GM12878 (cell line): ENCODE measurements at regions of chr15 and their contacts with region 1.

Region 1: GRCh38 chr15:54082836-54083492 is 104.7 kb downstream of the UNC13C start:
- DNase-seq: no peak
- ATAC-seq: peak; percentile 68
- H3K4me3 ChIP-seq: no peak overlapping the region
- H3K27ac ChIP-seq: no peak overlapping the region
- H3K4me1 ChIP-seq: no peaks in the 10 kb centered on the region
- H3K27me3 ChIP-seq: no peaks in the 10 kb centered on the region
- CTCF ChIP-seq: peak; percentile 56 to 80 (median 61)
- EP300 ChIP-seq: no peak
- POLR2A ChIP-seq: no peak
- RAD21 ChIP-seq: peak; percentile 72

Region 2: DNA sequence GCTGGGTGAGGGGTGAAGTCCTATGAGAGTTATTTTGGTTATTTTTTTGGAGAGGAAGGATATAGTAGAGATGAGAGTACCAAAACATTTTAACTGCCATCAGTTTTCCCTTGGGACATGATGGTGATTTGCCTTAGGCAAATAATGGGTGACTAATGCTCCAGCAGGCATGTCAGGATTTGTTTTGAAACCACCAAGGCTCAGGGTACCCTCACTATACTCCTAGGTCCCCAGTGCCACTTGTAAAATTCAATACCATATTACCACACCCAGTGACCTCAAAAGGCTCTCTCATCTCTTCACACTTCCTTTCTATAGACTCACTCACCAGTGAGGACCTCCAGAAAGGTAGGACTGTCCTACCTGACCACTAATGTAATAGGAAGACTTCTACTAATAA is 407.1 kb before region 1 on chr15:
- CTCF ChIA-PET with region 1: no interaction called
- POLR2A ChIA-PET with region 1: no interaction called
- RAD21 ChIA-PET with region 1: no interaction called
- SMC1A ChIA-PET with region 1: no interaction called
- in situ Hi-C with region 1: no loop called
- intact Hi-C with region 1: no loop called
- DNase-seq: no peak
- ATAC-seq: no peak
- H3K4me3 ChIP-seq: no peak overlapping the region
- H3K27ac ChIP-seq: no peak overlapping the region
- H3K4me1 ChIP-seq: no peaks in the 10 kb centered on the region
- H3K27me3 ChIP-seq: no peaks in the 10 kb centered on the region
- CTCF ChIP-seq: no peak
- EP300 ChIP-seq: no peak
- POLR2A ChIP-seq: no peak
- RAD21 ChIP-seq: no peak

Region 3: GRCh38 chr15:53962332-53963241 is 120.4 kb before region 1 on chr15:
- CTCF ChIA-PET with region 1: interaction called, 4 read pairs
- POLR2A ChIA-PET with region 1: no interaction called
- RAD21 ChIA-PET with region 1: interaction called, 7 read pairs
- SMC1A ChIA-PET with region 1: interaction called, 10 read pairs
- in situ Hi-C with region 1: no loop called
- intact Hi-C with region 1: no loop called
- DNase-seq: no peak
- ATAC-seq: peak; percentile 94
- H3K4me3 ChIP-seq: no peak overlapping the region
- H3K27ac ChIP-seq: no peak overlapping the region
- H3K4me1 ChIP-seq: no peaks in the 10 kb centered on the region
- H3K27me3 ChIP-seq: no peaks in the 10 kb centered on the region
- CTCF ChIP-seq: peak; percentile 42 to 70 (median 61)
- EP300 ChIP-seq: no peak
- POLR2A ChIP-seq: no peak
- RAD21 ChIP-seq: peak; percentile 68

Region 4: DNA sequence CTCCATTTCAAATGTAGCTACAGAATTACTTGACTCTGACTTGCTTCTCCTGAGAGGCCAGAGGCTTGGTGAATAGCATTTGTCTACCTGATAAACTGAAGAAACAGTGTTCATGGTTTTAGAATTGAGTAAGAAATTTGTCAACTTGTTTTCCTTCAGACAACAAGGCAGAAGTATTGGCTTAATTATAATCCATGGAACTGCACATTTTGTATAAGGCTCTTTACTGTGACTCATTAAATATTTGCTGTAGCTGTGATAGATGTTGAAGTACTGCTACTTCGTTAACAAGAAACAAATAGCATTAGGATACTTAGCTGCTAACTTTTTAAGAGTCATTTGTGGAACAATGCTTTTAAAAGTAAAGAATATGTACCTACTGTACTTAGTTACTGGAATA is 100.1 kb before region 1 on chr15:
- CTCF ChIA-PET with region 1: interaction called, 16 read pairs
- POLR2A ChIA-PET with region 1: interaction called, 4 read pairs
- RAD21 ChIA-PET with region 1: interaction called, 76 read pairs
- SMC1A ChIA-PET with region 1: interaction called, 52 read pairs
- in situ Hi-C with region 1: no loop called
- intact Hi-C with region 1: loop called (anchors 5 kb)
- DNase-seq: no peak
- ATAC-seq: no peak; the same call in 2 of the 3 replicates
- H3K4me3 ChIP-seq: no peak overlapping the region
- H3K27ac ChIP-seq: no peak overlapping the region
- H3K4me1 ChIP-seq: no peaks in the 10 kb centered on the region
- H3K27me3 ChIP-seq: no peaks in the 10 kb centered on the region
- CTCF ChIP-seq: no peak
- EP300 ChIP-seq: no peak
- POLR2A ChIP-seq: no peak
- RAD21 ChIP-seq: no peak

Region 5: GRCh38 chr15:54101664-54102270 is 18.8 kb after region 1 on chr15:
- CTCF ChIA-PET with region 1: interaction called, 12 read pairs
- POLR2A ChIA-PET with region 1: interaction called, 5 read pairs
- RAD21 ChIA-PET with region 1: interaction called, 122 read pairs
- SMC1A ChIA-PET with region 1: interaction called, 164 read pairs
- in situ Hi-C with region 1: no loop called
- intact Hi-C with region 1: no loop called
- DNase-seq: no peak
- ATAC-seq: peak; percentile 17
- H3K4me3 ChIP-seq: no peak overlapping the region
- H3K27ac ChIP-seq: no peak overlapping the region
- H3K4me1 ChIP-seq: no peaks in the 10 kb centered on the region
- H3K27me3 ChIP-seq: no peaks in the 10 kb centered on the region
- CTCF ChIP-seq: no peak
- EP300 ChIP-seq: no peak
- POLR2A ChIP-seq: no peak
- RAD21 ChIP-seq: no peak

Region 6: GRCh38 chr15:54273928-54274327 is 191.0 kb after region 1 on chr15:
- CTCF ChIA-PET with region 1: interaction called, 12 read pairs
- POLR2A ChIA-PET with region 1: no interaction called
- RAD21 ChIA-PET with region 1: interaction called, 4 read pairs
- SMC1A ChIA-PET with region 1: interaction called, 13 read pairs
- in situ Hi-C with region 1: no loop called
- intact Hi-C with region 1: no loop called
- DNase-seq: no peak
- ATAC-seq: no peak; the same call in 2 of the 3 replicates
- H3K4me3 ChIP-seq: no peak overlapping the region
- H3K27ac ChIP-seq: no peak overlapping the region
- H3K4me1 ChIP-seq: no peaks in the 10 kb centered on the region
- H3K27me3 ChIP-seq: no peaks in the 10 kb centered on the region
- CTCF ChIP-seq: peak in 1 of 3 experiments; percentile 6; a peak in 1 of 6 replicates
- EP300 ChIP-seq: no peak
- POLR2A ChIP-seq: no peak
- RAD21 ChIP-seq: 0 out of 2 replicates have a peak, but pooled peaks have one; percentile 2

Region 7: DNA sequence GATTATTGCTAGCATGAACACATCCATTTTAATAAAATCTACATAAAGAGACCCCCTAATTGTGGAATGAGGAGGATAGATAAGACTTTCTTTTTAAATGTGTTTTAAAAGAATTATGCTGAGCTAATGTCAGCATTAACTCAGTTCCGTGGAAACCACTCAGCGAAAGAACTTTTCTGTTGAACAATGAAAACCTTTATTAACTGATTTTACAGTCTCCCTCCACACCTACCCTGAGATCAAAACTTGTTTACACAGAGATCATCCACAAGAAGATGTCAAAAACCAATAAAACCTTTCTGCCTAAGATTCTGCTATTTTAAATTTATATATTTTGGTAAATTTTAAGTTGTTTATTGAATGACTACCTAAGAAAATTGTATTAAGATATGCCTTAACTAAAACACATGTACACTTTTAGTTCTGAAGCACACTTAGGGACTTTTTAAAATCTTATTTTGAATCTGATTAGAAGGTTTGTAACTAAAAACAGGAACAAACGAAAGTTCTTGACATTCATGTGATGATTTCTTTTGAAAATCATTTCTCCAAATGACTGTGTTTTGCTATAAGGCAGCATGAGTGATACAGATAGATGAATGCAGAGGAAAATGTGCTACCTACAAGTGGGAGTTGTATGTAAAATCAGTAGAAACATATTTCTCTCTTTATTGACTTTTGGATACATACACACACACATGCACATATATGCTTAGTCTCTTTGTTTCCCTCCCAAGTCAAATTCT is 264.3 kb after region 1 on chr15:
- CTCF ChIA-PET with region 1: no interaction called
- POLR2A ChIA-PET with region 1: no interaction called
- RAD21 ChIA-PET with region 1: interaction called, 9 read pairs
- SMC1A ChIA-PET with region 1: interaction called, 5 read pairs
- in situ Hi-C with region 1: no loop called
- intact Hi-C with region 1: loop called (anchors 5 kb)
- DNase-seq: peak; percentile 40
- ATAC-seq: peak; percentile 88
- H3K4me3 ChIP-seq: no peak overlapping the region
- H3K27ac ChIP-seq: no peak overlapping the region
- H3K4me1 ChIP-seq: no peaks in the 10 kb centered on the region
- H3K27me3 ChIP-seq: no peaks in the 10 kb centered on the region
- CTCF ChIP-seq: no peak
- EP300 ChIP-seq: peak; percentile 86 to 90
- POLR2A ChIP-seq: no peak
- RAD21 ChIP-seq: peak; percentile 12; the same call in 1 of the 2 replicates

Region 8: GRCh38 chr15:55168329-55168974 is 1085.5 kb after region 1 on chr15:
- CTCF ChIA-PET with region 1: interaction called, 12 read pairs
- POLR2A ChIA-PET with region 1: no interaction called
- RAD21 ChIA-PET with region 1: interaction called, 3 read pairs
- SMC1A ChIA-PET with region 1: interaction called, 3 read pairs
- in situ Hi-C with region 1: no loop called
- intact Hi-C with region 1: loop called (anchors 2 kb)
- DNase-seq: peak; percentile 8
- ATAC-seq: peak; percentile 99
- H3K4me3 ChIP-seq: no peak overlapping the region
- H3K27ac ChIP-seq: no peak overlapping the region
- H3K4me1 ChIP-seq: no peaks in the 10 kb centered on the region
- H3K27me3 ChIP-seq: no peaks in the 10 kb centered on the region
- CTCF ChIP-seq: peak; percentile 79 to 94 (median 86)
- EP300 ChIP-seq: no peak
- POLR2A ChIP-seq: no peak
- RAD21 ChIP-seq: peak; percentile 75